Transverse colon (tissue), 4 donors: ENCODE measurements at regions of chr9 and their contacts with region 1.

Region 1: DNA sequence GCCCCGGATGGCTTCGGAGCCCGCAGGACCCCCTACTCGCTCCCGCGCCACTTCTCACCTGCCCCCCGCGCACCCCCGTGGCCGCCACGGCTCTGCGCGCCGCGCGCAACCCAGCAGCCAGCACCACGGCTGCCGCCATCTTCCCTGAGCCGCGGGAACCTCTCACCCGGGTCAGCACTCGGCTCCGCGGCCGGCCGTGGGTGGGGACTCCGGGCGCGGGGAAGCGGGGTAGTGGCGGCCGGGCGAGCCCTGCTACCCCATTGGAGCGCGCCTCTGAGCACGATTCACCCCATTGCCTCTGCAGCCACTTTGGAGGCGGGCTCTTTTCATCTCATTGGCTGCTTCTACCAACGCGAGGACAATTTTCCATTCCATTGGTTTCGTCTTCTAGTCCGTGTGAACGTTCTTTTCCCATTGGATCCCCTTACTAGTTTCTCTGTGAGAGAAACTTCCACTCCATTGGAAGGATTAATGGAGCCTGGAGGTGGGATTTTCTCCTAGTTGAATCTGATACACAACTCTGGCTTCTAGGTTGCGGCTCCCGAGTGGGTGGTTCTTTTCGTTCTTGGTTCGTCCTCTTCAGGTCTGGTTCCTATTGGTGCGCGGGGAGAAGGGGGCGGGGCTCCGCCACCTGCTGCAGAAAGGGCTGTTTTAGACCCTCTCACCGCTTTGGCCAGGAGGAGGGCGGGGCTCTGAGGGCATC is at the start of gene HINT2:
- DNase-seq: peak; percentile 99
- H3K4me3 ChIP-seq: peak within 1 kb of the TSS; percentile 74 to 100 (median 90)
- H3K27ac ChIP-seq: peak within 1 kb of the TSS; percentile 100
- H3K4me1 ChIP-seq: peaks cover 21 to 38% (median 30%) of the 10 kb centered on the region in 4 donors
- H3K27me3 ChIP-seq: no peaks in the 10 kb centered on the region
- CTCF ChIP-seq: peak in 1 of 5 experiments; percentile 16
- EP300 ChIP-seq: no peak
- POLR2A ChIP-seq: peak; percentile 97
- total RNA-seq, gene HINT2: 16.8 to 58.0 (median 38.9) TPM

Region 2: GRCh38 chr9:35732122-35732799 is 82.7 kb before region 1 on chr9 and contains the starts of genes CREB3 and TLN1:
- in situ Hi-C with region 1: loop called in 1 of 4 experiments (anchors 10 kb)
- intact Hi-C with region 1: no loop called
- DNase-seq: peak; percentile 99
- H3K4me3 ChIP-seq: peak within 1 kb of the TSS; percentile 67 to 87 (median 78)
- H3K27ac ChIP-seq: peak within 1 kb of the TSS; percentile 94 to 98 (median 97)
- H3K4me1 ChIP-seq: peaks cover 36 to 68% (median 56%) of the 10 kb centered on the region in 4 donors
- H3K27me3 ChIP-seq: no peaks in the 10 kb centered on the region
- CTCF ChIP-seq: no peak
- EP300 ChIP-seq: no peak
- POLR2A ChIP-seq: peak; percentile 81
- total RNA-seq, gene CREB3: 22.4 to 69.7 (median 45.5) TPM
- total RNA-seq, gene TLN1: 158 to 328 (median 177) TPM